ENCODE measurements at regions of chr2 and their contacts with region 1.

Region 1: GRCh38 chr2:221573430-221574230 is 1.5 kb upstream of the EPHA4 start:
- H3K4me3 Mint-ChIP-seq: peak overlapping the region; percentile 81
- H3K27ac Mint-ChIP-seq: peak overlapping the region; percentile 42
- H3K4me1 Mint-ChIP-seq: peaks cover 40% of the 10 kb centered on the region
- H3K27me3 Mint-ChIP-seq: peaks cover 74% of the 10 kb centered on the region

Region 2: GRCh38 chr2:219736209-219736608 is 1837.4 kb before region 1 on chr2:
- intact Hi-C with region 1: loop called (anchors 1 kb)
- H3K4me3 Mint-ChIP-seq: no peak overlapping the region
- H3K27ac Mint-ChIP-seq: no peak overlapping the region
- H3K4me1 Mint-ChIP-seq: no peaks in the 10 kb centered on the region
- H3K27me3 Mint-ChIP-seq: peaks cover 19% of the 10 kb centered on the region

Region 3: DNA sequence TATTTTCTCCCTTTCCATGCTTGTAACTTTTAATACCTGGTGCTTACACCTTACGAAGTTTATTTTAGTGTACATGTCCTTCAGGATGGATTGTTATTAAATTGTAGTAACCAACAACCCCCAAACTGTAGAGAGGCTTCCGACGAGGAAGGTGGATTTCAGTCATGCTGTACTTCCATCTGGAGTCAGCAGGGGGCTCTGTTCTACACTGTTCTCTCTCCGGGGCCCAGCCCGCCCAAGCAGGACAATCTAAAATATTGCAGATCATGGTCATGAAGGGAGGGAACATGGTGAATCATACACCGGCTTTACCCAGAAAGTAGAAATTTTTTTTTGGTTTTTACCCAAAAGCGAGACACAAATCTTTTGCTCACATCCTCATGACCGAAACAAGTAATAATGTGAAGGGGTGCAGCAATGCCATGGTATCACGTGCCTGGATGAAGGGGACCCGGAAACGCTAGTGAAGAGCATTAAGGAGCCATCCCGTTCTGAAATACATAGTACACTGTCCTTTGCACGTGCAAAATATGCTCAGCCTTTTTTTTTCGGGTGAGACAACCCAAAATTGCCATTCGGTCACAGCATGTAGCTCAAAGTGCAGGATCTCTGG is 886.3 kb before region 1 on chr2:
- intact Hi-C with region 1: loop called (anchors 1 kb)
- H3K4me3 Mint-ChIP-seq: no peak overlapping the region
- H3K27ac Mint-ChIP-seq: no peak overlapping the region
- H3K4me1 Mint-ChIP-seq: no peaks in the 10 kb centered on the region
- H3K27me3 Mint-ChIP-seq: no peaks in the 10 kb centered on the region

Region 4: DNA sequence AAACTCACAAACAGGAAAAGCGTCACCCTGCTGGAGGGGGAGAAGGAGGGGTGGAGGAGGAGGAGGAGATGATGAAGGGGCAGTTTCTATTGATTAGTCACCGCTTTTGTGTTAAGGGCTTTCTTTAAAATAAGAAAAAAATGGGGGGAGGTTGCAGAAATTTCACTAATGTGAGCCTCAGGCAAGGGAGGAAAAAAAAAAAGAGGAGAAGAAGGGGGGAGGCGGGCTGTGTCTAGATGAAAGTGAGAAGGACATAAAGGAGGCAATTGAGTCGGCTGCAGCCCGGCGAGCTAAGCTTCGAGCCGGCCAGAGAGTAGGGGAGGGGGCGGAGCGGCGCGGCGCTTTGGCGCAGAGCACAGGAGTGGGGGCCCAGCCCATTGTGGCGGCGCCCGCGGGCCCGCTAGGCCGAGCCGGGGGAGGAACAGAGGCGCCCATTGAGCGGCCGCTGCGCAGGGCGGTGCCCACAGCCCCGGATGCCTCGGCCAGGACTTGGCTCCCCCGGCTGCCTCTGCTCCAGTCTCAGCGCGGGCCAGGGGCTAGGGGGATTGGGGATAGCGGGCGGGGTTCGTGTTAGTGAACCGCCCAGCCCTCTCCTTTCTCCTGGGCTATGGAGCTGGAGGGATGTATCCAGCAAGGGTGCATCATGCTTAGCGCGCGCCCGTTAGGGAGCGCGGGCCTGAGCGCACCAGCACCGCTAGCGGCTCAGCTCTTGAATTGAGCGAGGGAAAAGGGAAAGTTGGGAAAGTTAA is 717.3 kb after region 1 on chr2:
- intact Hi-C with region 1: no loop called
- H3K4me3 Mint-ChIP-seq: no peak overlapping the region
- H3K27ac Mint-ChIP-seq: no peak overlapping the region
- H3K4me1 Mint-ChIP-seq: peaks cover 48% of the 10 kb centered on the region
- H3K27me3 Mint-ChIP-seq: peaks cover 99% of the 10 kb centered on the region